Caco-2 (cell line): ENCODE measurements at regions of chr1 and their contacts with region 1.

Region 1: DNA sequence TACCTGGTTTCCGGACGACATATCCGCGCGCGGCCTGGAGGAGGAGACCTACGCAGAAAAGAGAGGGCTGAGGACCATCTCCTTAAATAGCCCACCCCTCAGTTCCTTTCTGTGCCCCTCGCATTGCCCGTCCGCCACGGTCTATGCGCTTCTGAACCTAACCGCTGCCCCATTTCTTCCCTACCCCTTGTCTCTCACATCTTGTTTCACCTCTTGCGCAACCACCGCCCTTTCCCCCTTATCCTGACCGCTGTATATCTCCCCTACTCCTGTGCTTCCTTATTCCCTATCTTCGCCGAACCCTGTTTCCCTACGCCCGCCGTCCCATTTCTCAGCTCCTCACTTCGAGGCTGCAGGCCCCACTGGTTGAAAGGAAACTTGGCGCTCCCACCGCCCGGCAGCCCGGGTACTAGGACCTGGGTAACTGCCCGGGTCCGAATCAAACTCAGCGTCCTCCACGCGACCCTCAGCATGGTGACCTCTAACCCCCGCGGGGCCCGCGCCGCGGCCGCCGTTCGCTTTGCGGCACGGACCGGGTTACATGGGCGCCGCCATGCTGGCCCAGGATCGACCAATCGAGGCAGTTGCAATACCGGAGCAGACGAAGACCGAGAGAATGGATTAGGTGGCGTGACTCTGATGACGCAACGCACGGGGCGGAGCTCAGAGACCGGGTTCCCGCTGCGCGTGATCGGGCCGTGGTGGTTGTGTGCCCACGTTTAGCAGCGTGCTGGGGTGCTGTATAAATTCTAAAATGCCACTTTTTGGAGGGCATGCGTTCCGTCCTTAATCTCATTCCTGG is at the start of gene MRPS15:
- DNase-seq: peak; percentile 91 to 92
- H3K4me3 ChIP-seq: peak within 1 kb of the TSS; percentile 61
- H3K4me3 Mint-ChIP-seq: peak within 1 kb of the TSS; percentile 90
- H3K27ac Mint-ChIP-seq: peak within 1 kb of the TSS; percentile 91
- H3K4me1 ChIP-seq: peaks cover 13% of the 10 kb centered on the region
- H3K4me1 Mint-ChIP-seq: peaks cover 12% of the 10 kb centered on the region
- H3K27me3 ChIP-seq: no peaks in the 10 kb centered on the region
- H3K27me3 Mint-ChIP-seq: no peaks in the 10 kb centered on the region
- CTCF ChIP-seq: no peak
- total RNA-seq, gene MRPS15: 70.2 and 77.0 TPM in 2 replicates

Region 2: DNA sequence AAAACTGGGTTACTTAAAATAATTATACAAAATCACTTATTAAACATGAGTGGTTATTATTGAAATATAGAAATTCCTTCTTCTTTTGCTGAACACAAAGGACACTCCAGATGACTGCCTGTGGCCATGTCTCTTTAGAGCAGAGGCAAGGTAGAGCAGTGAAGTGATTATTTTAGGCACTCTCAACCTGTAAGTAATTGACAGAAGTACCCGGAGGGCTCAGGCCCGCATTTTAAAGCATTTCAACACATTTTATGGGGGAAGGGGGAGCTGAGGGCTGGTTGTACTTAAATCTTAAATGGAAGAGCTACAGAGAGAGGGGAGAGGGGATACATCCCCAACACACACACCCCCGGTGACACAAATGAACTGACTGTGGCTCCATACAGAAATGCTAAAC is 24.0 kb before region 1 on chr1:
- CTCF ChIA-PET with region 1: no interaction called
- POLR2A ChIA-PET with region 1: no interaction called
- intact Hi-C with region 1: no loop called
- DNase-seq: no peak
- H3K4me3 ChIP-seq: no peak overlapping the region
- H3K4me3 Mint-ChIP-seq: no peak overlapping the region
- H3K27ac Mint-ChIP-seq: no peak overlapping the region
- H3K4me1 ChIP-seq: no peaks in the 10 kb centered on the region
- H3K4me1 Mint-ChIP-seq: peaks cover 6% of the 10 kb centered on the region
- H3K27me3 ChIP-seq: no peaks in the 10 kb centered on the region
- H3K27me3 Mint-ChIP-seq: no peaks in the 10 kb centered on the region
- CTCF ChIP-seq: no peak

Region 3: GRCh38 chr1:36450270-36450918 is 13.6 kb before region 1 on chr1 and contains the start of gene OSCP1:
- CTCF ChIA-PET with region 1: interaction called, 3 read pairs
- POLR2A ChIA-PET with region 1: interaction called, 22 read pairs
- intact Hi-C with region 1: no loop called
- DNase-seq: peak; percentile 91
- H3K4me3 ChIP-seq: peak within 1 kb of the TSS; percentile 54
- H3K4me3 Mint-ChIP-seq: peak within 1 kb of the TSS; percentile 65
- H3K27ac Mint-ChIP-seq: peak within 1 kb of the TSS; percentile 90
- H3K4me1 ChIP-seq: no peaks in the 10 kb centered on the region
- H3K4me1 Mint-ChIP-seq: no peaks in the 10 kb centered on the region
- H3K27me3 ChIP-seq: no peaks in the 10 kb centered on the region
- H3K27me3 Mint-ChIP-seq: no peaks in the 10 kb centered on the region
- CTCF ChIP-seq: no peak
- total RNA-seq, gene OSCP1: 0.51 and 0.91 TPM in 2 replicates

Region 4: DNA sequence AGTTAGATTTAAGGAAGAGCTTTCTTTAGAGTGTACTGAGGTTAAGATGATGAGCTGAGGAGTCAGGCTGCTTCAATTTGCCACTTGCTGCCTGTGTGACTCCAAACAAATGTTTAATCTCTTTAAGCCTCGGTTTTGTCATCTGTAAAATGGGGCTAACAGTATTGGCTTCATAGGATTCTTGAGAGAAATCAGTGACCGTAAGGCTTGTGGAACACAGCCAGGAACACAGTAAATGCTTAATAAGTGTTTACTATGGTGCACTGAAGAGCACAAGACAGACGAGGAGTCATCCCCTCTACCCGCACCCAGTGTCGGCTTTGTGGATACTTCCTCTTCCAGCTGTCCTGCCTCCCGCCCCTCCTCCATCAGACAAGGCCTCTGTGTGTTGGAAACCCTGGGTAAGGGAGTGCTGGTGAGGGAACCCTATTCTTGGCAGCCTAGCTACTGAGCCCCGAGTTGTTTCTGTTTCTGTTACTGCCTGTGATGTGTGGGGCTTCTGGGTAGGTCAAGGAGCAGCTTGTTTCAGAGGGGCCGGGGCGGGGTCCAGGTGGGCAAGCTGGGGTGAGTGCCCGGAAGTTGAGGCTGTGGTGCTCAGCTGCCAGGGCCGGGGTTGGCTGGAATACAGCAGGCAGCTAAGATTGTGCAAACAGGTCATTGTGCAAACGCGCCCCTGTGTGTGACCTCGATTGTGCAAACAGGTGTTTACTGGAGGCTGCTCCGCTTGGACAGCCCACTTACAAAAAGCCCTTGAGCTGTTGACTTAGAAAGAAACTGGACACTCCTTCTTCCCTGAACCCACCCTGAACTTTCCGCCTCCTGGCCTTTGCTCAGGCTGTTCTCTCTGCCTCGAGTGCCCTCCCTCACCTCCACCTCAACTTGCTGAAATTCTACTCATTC is 22.7 kb after region 1 on chr1:
- CTCF ChIA-PET with region 1: interaction called, 3 read pairs
- POLR2A ChIA-PET with region 1: interaction called, 10 read pairs
- intact Hi-C with region 1: loop called (anchors 2 kb)
- DNase-seq: peak; percentile 85 to 90
- H3K4me3 ChIP-seq: no peak overlapping the region
- H3K4me3 Mint-ChIP-seq: peak overlapping the region; percentile 6
- H3K27ac Mint-ChIP-seq: peak overlapping the region; percentile 71
- H3K4me1 ChIP-seq: peaks cover 44% of the 10 kb centered on the region
- H3K4me1 Mint-ChIP-seq: peaks cover 19% of the 10 kb centered on the region
- H3K27me3 ChIP-seq: no peaks in the 10 kb centered on the region
- H3K27me3 Mint-ChIP-seq: no peaks in the 10 kb centered on the region
- CTCF ChIP-seq: no peak